ENCODE measurements at regions of chr6 and their contacts with region 1.

Region 1: GRCh38 chr6:128520436-128521281 is at the start of gene PTPRK:
- DNase-seq: peak; percentile 94
- H3K4me3 ChIP-seq: peak within 1 kb of the TSS; percentile 81
- H3K27ac ChIP-seq: peak within 1 kb of the TSS; percentile 91
- H3K4me1 ChIP-seq: peaks cover 47% of the 10 kb centered on the region
- H3K27me3 ChIP-seq: no peaks in the 10 kb centered on the region
- CTCF ChIP-seq: peak; percentile 24; the same call in 1 of the 2 replicates
- total RNA-seq, gene PTPRK: 82.5 and 89.3 TPM in 2 replicates

Region 2: DNA sequence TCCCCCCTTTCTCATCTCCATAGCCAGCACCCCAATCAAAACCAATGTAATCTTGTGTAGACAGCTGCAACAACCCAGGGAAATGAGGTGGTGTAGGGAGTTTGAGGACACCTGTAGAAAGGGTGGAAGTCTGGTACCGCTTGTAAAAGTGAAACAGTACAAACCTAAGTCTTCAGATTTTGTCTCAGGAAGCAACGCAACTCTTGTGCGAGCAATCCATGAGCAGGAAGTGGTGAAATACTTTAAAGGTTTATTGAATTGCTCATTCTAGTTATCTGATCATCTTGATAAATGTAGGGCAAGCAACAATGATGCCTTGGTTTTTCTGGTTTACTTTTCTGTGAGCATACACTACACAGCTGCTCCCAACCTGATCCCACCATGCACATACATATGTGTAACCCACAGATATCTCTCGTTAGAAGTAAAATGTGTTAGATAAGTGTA is 548.7 kb before region 1 on chr6:
- CTCF ChIA-PET with region 1: no interaction called
- POLR2A ChIA-PET with region 1: no interaction called
- intact Hi-C with region 1: loop called (anchors 5 kb)
- DNase-seq: peak; percentile 46 to 76
- H3K4me3 ChIP-seq: no peak overlapping the region
- H3K27ac ChIP-seq: 0 out of 2 replicates have a peak overlapping the region, but pooled peaks have one; percentile 9
- H3K4me1 ChIP-seq: peaks cover 11% of the 10 kb centered on the region
- H3K27me3 ChIP-seq: no peaks in the 10 kb centered on the region
- CTCF ChIP-seq: no peak

Region 3: GRCh38 chr6:128192972-128193371 is 327.7 kb before region 1 on chr6:
- CTCF ChIA-PET with region 1: no interaction called
- POLR2A ChIA-PET with region 1: no interaction called
- intact Hi-C with region 1: no loop called
- DNase-seq: peak in 1 of 2 experiments; percentile 17
- H3K4me3 ChIP-seq: no peak overlapping the region
- H3K27ac ChIP-seq: no peak overlapping the region
- H3K4me1 ChIP-seq: no peaks in the 10 kb centered on the region
- H3K27me3 ChIP-seq: no peaks in the 10 kb centered on the region
- CTCF ChIP-seq: no peak

Region 4: DNA sequence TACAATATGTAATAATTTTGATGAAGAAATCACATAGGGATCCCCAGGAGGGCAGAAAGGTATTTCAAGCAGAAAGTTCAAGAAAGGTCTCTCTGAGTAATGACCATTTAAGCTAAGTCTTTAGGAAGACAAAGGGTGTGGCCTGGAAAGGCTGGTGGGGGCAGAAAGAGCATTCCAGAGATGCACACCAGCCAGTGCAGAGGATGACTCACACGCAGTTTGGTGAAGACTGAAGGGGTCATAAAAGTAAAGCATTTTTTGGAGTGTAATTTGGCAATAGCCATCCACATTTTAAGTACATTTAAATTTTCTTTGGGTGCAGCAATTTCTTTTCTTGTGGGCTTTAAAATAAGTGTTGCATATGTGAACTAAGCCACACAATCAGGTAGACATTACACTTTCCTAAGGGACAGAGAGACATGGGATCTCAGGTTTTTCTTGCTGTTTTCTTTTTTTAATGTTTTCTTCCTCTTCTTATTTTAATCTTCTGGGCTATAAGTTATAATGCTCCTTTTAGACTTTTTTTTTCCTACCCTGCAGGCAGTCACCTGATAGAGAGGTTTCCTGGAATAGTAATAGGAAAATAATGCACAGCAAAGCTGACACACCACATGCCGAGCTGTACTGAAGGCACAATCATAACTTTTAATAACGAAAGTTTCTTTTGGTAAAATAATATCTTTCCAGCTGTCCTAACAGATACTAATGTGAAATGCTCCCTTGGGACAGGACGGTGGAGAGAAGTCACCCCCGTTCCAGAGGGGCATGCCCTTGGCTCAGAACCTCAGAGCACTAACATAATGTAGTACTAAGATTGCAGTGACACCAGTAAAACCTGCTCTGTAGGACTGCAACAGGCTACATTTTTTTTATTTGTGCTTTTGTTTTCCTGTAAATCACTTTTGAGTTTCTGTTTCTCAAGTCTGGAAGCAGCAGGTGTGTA is 49.3 kb after region 1 on chr6:
- CTCF ChIA-PET with region 1: no interaction called
- POLR2A ChIA-PET with region 1: interaction called, 9 read pairs
- intact Hi-C with region 1: loop called (anchors 1 kb)
- DNase-seq: peak; percentile 74 to 100
- H3K4me3 ChIP-seq: peak overlapping the region; percentile 41; the same call in 1 of the 2 replicates
- H3K27ac ChIP-seq: peak overlapping the region; percentile 93
- H3K4me1 ChIP-seq: peaks cover 49% of the 10 kb centered on the region
- H3K27me3 ChIP-seq: no peaks in the 10 kb centered on the region
- CTCF ChIP-seq: no peak

Region 5: DNA sequence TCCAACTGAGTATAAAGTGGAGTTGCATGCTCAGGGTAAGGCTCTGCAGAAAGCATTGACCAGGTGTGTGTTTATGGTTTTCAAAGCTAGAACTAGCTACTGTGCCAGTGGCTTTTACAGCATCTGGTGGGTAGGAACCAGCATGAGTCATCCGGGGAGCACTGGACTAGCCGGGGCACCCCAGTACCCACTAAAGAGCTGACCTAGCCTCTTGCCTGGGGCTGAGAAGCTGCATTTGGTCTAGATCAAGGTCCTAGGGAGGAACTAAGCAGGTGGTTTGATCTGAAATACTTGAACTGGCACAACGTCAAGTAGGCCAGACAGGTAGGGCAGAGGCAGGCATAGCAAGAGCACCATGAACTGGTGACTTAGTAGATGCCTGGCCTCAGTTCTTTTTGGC is 109.5 kb after region 1 on chr6:
- CTCF ChIA-PET with region 1: no interaction called
- POLR2A ChIA-PET with region 1: interaction called, 10 read pairs
- intact Hi-C with region 1: loop called (anchors 1 kb)
- DNase-seq: peak; percentile 75 to 95
- H3K4me3 ChIP-seq: no peak overlapping the region
- H3K27ac ChIP-seq: peak overlapping the region; percentile 44
- H3K4me1 ChIP-seq: peaks cover 47% of the 10 kb centered on the region
- H3K27me3 ChIP-seq: no peaks in the 10 kb centered on the region
- CTCF ChIP-seq: no peak

Region 6: DNA sequence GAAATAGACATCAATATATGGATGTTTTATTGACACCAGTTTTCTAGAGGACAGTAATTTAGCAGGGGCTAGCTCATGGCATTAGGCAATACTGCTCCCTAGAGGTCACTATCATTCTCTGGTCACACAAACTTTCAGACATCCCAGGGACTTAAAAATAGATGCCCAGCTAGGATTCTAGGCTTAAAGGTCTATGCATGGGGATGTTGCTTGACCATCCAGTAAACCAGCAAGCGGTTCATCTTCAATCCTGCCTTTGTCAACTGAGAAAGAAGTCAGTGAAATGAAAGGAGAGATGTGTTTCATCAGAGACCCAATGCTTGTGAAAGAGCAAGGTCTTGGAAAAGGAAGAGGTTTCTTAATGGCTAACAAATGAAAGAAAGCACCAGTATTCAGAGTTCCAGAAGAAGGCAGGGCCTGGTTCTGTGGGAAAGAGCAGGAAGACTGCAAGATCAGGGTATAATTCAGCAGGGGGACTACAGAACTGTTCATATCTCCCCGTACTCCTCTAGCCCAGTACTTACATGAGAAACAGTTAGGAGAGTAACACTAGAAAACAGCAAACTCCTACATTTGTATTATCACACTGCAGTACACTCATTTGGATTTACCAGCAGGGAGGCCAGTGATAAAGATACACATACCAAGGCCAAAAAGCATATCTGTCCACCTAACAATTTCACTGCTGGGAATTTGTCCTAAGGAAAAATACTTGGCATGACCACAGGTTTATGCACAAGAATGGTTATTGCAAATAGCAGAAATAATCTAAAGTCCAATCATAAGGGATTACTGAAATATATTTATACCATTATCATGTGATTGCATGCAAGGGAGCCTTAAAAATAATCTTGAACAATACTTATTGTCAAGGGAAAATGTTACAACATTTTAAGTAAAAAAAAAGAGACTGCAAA is 210.8 kb after region 1 on chr6:
- CTCF ChIA-PET with region 1: interaction called, 8 read pairs
- POLR2A ChIA-PET with region 1: no interaction called
- intact Hi-C with region 1: loop called (anchors 1 kb)
- DNase-seq: peak; percentile 22 to 63
- H3K4me3 ChIP-seq: no peak overlapping the region
- H3K27ac ChIP-seq: no peak overlapping the region
- H3K4me1 ChIP-seq: no peaks in the 10 kb centered on the region
- H3K27me3 ChIP-seq: no peaks in the 10 kb centered on the region
- CTCF ChIP-seq: peak; percentile 86

Region 7: DNA sequence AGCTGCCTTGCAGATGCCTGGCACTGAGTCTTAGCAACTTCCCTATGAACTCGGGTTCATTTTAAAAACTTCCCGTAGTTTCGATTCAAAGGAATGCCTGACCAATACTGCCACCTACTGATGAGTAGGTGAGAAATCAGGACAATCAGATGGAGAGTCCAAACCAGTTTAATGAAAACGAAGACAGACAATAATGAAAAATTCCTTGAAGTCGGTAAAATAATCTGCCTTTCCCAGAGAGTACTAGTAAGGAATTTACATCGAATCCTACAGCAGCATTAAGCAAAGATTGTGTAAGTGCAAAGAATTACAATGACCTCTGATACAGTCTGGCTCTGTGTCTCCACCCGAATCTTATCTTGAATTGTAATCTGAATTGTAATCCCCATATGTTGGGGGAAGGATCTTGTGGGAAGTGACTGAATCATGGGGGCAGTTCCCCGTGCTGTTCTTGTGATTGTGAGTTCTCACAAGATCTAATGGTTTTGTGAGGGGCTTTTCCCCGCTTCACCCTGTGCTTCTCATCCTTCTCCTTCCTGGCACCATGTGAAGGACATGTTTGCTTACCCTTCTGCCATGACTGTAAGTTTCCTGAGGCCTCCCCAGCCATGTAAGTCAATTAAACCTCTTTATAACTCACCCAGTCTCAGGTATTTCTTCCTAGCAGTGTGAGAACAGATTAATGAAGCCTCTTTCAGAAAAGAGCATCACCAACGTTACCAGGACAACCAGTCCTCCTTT is 1054.9 kb after region 1 on chr6:
- CTCF ChIA-PET with region 1: no interaction called
- POLR2A ChIA-PET with region 1: no interaction called
- intact Hi-C with region 1: loop called (anchors 5 kb)
- DNase-seq: peak in 1 of 2 experiments; percentile 66
- H3K4me3 ChIP-seq: peak overlapping the region; percentile 34; the same call in 1 of the 2 replicates
- H3K27ac ChIP-seq: peak overlapping the region; percentile 13; the same call in 1 of the 2 replicates
- H3K4me1 ChIP-seq: peaks cover 6% of the 10 kb centered on the region
- H3K27me3 ChIP-seq: no peaks in the 10 kb centered on the region
- CTCF ChIP-seq: peak; percentile 92

Measured in PC-9 (cell line).